Heart right ventricle (tissue), 16 donors: ENCODE measurements at regions of chr13 and their contacts with region 1.

Region 1: GRCh38 chr13:77952727-77953126 is 34.1 kb upstream of the EDNRB start:
- DNase-seq: no peak
- ATAC-seq: no peak
- H3K4me3 ChIP-seq: no peak overlapping the region
- H3K27ac ChIP-seq: no peak overlapping the region
- H3K4me1 ChIP-seq: no peaks in the 10 kb centered on the region
- H3K27me3 ChIP-seq: no peaks in the 10 kb centered on the region
- CTCF ChIP-seq: no peak

Region 2: DNA sequence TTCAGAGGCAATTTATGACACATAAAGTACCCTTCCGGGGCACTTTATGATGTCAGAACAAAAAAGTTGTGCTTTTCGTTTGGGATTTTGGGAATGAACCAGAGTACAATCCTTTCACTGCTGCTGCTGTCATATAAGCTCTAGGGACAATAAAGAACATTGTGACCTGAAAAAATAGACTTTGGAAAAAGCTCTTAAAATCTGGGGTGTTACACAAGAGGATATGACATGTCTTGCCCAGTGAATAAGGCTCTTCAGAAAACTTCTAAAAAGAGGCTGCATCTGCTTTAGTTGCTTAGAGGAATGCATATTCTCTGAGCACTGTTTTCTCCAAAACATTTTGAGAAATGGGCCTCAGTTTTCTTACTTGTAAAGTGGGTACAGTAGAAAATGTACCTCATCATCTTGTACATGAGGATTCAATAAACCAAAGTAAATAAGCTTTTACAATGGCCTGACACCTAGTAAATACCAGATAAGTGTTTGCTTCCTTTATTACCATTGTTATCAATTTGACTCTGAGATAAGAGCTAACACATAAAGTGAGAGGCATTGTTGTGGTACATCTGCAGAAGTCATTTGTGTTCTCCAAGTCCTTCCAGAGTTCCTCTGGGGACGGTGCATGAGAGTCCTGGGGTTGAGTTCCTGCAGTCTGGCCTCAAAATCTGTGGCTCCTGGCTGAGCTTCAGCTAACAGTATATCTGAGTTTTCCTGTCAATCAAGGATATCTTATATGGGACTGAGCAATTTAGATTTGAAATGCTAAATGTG is 33.3 kb after region 1 on chr13:
- intact Hi-C with region 1: loop called in 1 of 10 experiments (anchors 5 kb)
- DNase-seq: peak in 1 of 2 donors; percentile 19
- ATAC-seq: peak; percentile 62 to 84 (median 70)
- H3K4me3 ChIP-seq: no peak overlapping the region
- H3K27ac ChIP-seq: peak overlapping the region in 1 of 10 donors; percentile 23
- H3K4me1 ChIP-seq: peaks cover 0 to 46% (median 9%) of the 10 kb centered on the region in 9 donors
- H3K27me3 ChIP-seq: no peaks in the 10 kb centered on the region
- CTCF ChIP-seq: no peak